ENCODE measurements at regions of chr1 and their contacts with region 1.

Region 1: DNA sequence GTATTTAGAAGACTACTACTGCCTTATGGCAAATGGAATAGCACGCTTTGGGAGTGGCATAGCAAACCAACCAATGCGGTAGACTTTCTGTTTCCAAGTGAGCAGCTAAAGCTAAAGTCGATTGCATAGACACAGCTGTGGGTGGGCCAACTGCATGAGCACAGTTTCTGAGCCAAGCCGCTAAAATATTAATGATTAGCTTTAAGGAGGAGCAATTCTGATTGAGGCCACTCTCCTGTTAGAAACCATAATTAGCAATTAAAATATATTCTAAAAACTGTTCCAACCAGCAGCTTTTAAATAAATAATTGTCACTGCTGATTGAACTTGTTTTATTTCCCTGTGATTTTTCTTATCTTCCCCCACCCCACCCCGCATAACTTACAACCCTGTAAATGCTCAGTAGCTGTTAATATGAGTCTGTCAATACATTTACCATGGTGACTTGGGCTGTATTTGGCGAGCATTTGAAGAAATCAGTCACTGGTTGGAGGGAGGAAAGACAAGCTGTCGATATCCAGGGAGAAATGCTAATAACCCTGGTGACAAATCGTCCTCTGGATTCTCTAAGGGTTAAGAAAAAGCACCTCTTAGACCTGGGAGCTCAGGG is 32.2 kb downstream of the RNF220 start:
- DNase-seq: no peak
- ATAC-seq: no peak
- H3K4me3 ChIP-seq: no peak overlapping the region
- H3K27ac ChIP-seq: no peak overlapping the region
- H3K4me1 ChIP-seq: no peaks in the 10 kb centered on the region
- H3K27me3 ChIP-seq: peaks cover 2 to 13% of the 10 kb centered on the region in 2 experiments; a peak in 3 of 5 replicates
- CTCF ChIP-seq: no peak
- EP300 ChIP-seq: no peak
- POLR2A ChIP-seq: no peak
- RAD21 ChIP-seq: no peak

Region 2: GRCh38 chr1:44423591-44424537 is 13.3 kb before region 1 on chr1:
- CTCF ChIA-PET with region 1: no interaction called
- POLR2A ChIA-PET with region 1: interaction called, 14 read pairs
- in situ Hi-C with region 1: no loop called
- intact Hi-C with region 1: no loop called
- DNase-seq: no peak
- ATAC-seq: no peak
- H3K4me3 ChIP-seq: no peak overlapping the region
- H3K27ac ChIP-seq: no peak overlapping the region
- H3K4me1 ChIP-seq: no peaks in the 10 kb centered on the region
- H3K27me3 ChIP-seq: peaks cover 48 to 71% of the 10 kb centered on the region in 2 experiments
- CTCF ChIP-seq: no peak
- EP300 ChIP-seq: no peak
- POLR2A ChIP-seq: no peak
- RAD21 ChIP-seq: no peak

Measured in K562 (cell line).